Sigmoid colon (tissue), 7 donors: ENCODE measurements at regions of chr11 and their contacts with region 1.

Region 1: GRCh38 chr11:121722431-121723245 is 269.9 kb upstream of the SORL1-AS1 start:
- DNase-seq: peak; percentile 97
- H3K4me3 ChIP-seq: peak overlapping the region; percentile 35 to 56 (median 50)
- H3K27ac ChIP-seq: peak overlapping the region; percentile 88 to 96 (median 89)
- H3K4me1 ChIP-seq: peaks cover 0 to 23% (median 15%) of the 10 kb centered on the region in 4 donors
- H3K27me3 ChIP-seq: no peaks in the 10 kb centered on the region
- CTCF ChIP-seq: peak in 1 of 4 experiments; percentile 13
- EP300 ChIP-seq: peak; percentile 19 to 97 (median 74)
- POLR2A ChIP-seq: peak; percentile 59 to 85

Region 2: DNA sequence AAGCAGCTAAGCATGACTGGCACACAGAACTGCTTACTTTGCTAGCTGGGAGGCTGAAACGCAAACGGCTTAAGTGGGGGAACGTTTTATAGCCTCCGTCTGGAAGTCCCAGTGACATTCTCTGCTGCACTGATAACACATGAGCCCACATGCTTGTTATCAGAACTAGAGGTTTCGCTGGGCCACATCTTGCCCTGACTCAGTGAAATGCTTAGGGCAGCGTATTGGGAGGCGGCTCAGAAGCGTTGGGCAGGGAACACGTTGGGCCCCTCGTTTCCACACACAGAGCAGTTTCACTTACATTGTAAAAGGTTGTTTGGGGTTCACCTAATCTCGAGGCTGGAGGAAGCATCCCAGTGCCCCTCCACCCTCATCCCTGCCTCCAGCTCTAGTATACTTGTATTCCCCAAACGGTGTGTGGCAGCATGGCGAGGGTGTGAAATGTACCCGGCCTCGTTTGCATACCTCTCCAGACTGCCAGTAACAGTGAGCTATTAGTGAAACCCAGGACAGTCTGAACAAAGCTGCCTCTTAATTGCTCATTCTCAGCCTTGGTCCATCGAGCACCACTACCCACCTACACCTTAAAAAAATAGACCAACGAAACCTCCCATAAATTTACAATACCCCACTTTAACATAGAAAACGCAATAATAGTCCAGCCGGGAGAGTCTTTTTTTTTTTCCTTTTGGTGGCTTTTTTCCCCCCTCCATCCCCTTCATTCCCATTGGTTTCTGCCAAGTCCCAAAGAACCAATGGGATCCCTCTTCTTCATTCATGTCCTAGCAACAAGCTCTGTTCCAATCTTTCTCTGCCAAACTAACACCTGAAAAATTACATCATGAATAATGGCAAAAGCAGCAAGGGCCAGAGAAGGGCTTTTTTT is 51.1 kb before region 1 on chr11:
- intact Hi-C with region 1: loop called (anchors 2 kb)
- DNase-seq: no peak
- H3K4me3 ChIP-seq: peak overlapping the region in 3 of 4 donors; percentile 8 to 22 (median 16)
- H3K27ac ChIP-seq: peak overlapping the region; percentile 82 to 90 (median 84)
- H3K4me1 ChIP-seq: peaks cover 0 to 43% (median 39%) of the 10 kb centered on the region in 4 donors
- H3K27me3 ChIP-seq: no peaks in the 10 kb centered on the region
- CTCF ChIP-seq: no peak
- EP300 ChIP-seq: no peak
- POLR2A ChIP-seq: no peak

Region 3: GRCh38 chr11:121741761-121742361 is 19.2 kb after region 1 on chr11:
- intact Hi-C with region 1: loop called (anchors 1 kb)
- DNase-seq: peak; percentile 94
- H3K4me3 ChIP-seq: peak overlapping the region in 1 of 4 donors; percentile 7
- H3K27ac ChIP-seq: peak overlapping the region; percentile 82 to 89 (median 86)
- H3K4me1 ChIP-seq: peaks cover 0 to 37% (median 32%) of the 10 kb centered on the region in 4 donors
- H3K27me3 ChIP-seq: no peaks in the 10 kb centered on the region
- CTCF ChIP-seq: no peak
- EP300 ChIP-seq: peak; percentile 57 to 94 (median 82)
- POLR2A ChIP-seq: no peak